Prostate gland (tissue), 2 donors: ENCODE measurements at regions of chr20 and their contacts with region 1.

Region 1: GRCh38 chr20:297098-297924 is at the start of gene ZCCHC3:
- DNase-seq: peak; percentile 87
- H3K4me3 ChIP-seq: peak within 1 kb of the TSS; percentile 85 to 95
- H3K27ac ChIP-seq: peak within 1 kb of the TSS; percentile 97 to 99
- H3K4me1 ChIP-seq: peaks cover 18% of the 10 kb centered on the region
- H3K27me3 ChIP-seq: no peaks in the 10 kb centered on the region
- CTCF ChIP-seq: peak in 3 of 4 experiments; percentile 12 to 33 (median 21)
- POLR2A ChIP-seq: peak; percentile 65
- total RNA-seq, gene ZCCHC3: 16.3 to 27.0 TPM

Region 2: DNA sequence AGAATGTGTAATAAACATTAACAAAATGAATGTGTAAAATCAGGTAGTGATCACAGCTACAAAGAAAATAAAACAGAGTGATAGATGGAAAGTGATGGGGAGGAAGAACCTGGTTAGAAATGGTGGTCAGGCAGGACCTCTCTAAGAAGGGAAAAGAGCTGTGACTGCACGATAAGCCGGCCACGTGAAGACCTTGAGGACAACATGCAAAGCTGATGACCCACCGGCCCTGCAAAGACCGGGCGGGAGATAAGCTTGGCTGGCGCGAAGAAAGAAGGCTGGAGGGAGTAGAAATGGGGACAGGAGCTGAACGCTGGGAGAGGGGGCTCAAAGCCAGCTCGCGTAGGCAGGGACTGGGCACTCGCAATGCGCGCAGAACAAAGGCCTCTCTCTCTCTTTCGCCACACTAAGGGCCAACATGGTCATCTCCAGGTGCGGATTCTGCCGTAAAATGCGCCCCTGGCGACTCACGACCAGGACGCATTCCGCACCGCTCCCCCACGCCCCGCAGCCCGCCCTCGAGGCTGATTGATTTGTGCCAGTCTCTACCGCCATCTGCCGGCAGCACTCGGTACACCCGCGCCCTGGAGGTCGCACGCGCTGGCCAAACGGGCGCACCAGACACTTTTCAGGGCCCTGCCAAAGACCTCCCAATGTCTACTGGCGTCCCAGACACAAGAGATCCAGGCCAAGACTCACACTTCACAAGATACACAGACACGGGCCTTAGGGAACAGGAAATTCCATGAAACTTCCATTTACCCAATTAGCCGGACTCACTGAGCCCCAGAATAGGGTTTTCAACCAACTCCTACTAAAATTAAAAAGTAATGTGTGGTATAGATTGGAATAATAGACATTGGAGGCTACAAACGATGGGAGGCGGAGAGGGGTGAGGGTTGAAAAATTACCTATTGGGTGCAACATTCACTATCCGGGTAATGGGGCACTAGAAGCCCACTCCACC is 30.4 kb before region 1 on chr20:
- intact Hi-C with region 1: no loop called
- DNase-seq: peak; percentile 75
- H3K4me3 ChIP-seq: peak overlapping the region; percentile 22 to 31
- H3K27ac ChIP-seq: peak overlapping the region in 1 of 2 donors; percentile 2
- H3K4me1 ChIP-seq: no peaks in the 10 kb centered on the region
- H3K27me3 ChIP-seq: no peaks in the 10 kb centered on the region
- CTCF ChIP-seq: peak; percentile 89 to 97 (median 94)
- POLR2A ChIP-seq: no peak

Region 3: GRCh38 chr20:324177-325044 is 27.1 kb after region 1 on chr20:
- intact Hi-C with region 1: loop called (anchors 2 kb)
- DNase-seq: peak; percentile 86
- H3K4me3 ChIP-seq: peak overlapping the region; percentile 69 to 76
- H3K27ac ChIP-seq: peak overlapping the region; percentile 93 to 97
- H3K4me1 ChIP-seq: peaks cover 4% of the 10 kb centered on the region
- H3K27me3 ChIP-seq: no peaks in the 10 kb centered on the region
- CTCF ChIP-seq: peak in 2 of 4 experiments; percentile 30 to 33
- POLR2A ChIP-seq: peak; percentile 74